ENCODE measurements at regions of chr2 and their contacts with region 1.

Region 1: GRCh38 chr2:201118121-201118960 is 2.4 kb downstream of the CFLAR start:
- DNase-seq: peak; percentile 90
- H3K4me3 ChIP-seq: peak overlapping the region; percentile 77 to 99 (median 77)
- H3K27ac ChIP-seq: peak overlapping the region; percentile 88
- H3K4me1 ChIP-seq: peaks cover 60% of the 10 kb centered on the region
- H3K27me3 ChIP-seq: no peaks in the 10 kb centered on the region
- CTCF ChIP-seq: peak; percentile 20 to 66
- POLR2A ChIP-seq: peak; percentile 67

Region 2: DNA sequence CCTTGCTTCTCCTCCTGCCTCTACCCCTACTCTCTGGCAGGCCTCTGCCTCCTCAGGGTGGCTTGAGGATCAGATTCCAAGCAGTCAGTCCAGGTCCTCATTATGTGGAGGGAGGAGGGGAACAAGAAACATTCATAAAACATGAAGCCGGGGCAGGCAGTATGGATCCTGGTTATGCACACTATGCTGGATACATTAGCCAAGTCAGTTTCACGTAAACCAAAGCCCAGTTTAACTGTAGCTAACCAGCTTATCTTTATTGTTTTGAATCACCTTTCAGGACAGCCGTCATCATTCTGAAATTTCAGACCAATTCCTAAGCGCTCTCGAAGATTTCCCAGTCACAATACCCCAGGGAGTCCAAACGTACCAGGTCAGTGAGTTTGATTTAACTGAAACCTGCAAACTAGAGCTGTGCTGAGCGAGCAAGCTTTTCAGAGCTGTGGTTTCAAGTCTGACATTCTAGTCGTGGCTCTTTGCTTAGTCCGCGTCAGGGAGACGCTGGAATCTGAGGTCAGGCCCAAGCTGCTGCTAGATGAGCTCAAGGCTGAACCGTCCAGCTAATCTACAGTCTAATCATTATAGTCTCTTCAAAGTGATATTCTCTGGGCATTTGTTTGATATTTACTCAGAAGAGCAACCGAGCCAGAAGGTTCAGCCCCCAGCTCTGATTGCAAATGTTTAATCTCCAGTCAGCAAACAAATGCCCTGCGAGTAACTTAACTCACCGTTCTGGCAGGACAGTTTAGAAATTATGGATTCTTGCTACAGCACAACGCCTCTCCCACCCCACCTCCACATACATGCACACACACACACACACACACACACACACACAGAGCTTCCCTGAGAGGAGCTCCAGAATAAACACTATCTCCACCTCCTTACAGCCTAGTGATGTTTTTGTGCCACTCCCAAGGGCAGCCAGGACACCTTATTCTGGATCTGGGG is 370.4 kb before region 1 on chr2:
- CTCF ChIA-PET with region 1: no interaction called
- POLR2A ChIA-PET with region 1: no interaction called
- dilution Hi-C with region 1: no loop called
- intact Hi-C with region 1: no loop called
- DNase-seq: no peak
- H3K4me3 ChIP-seq: no peak overlapping the region
- H3K27ac ChIP-seq: no peak overlapping the region
- H3K4me1 ChIP-seq: peaks cover 8% of the 10 kb centered on the region
- H3K27me3 ChIP-seq: no peaks in the 10 kb centered on the region
- CTCF ChIP-seq: no peak
- POLR2A ChIP-seq: no peak

Region 3: GRCh38 chr2:201130524-201131186 is 12.3 kb after region 1 on chr2:
- CTCF ChIA-PET with region 1: interaction called, 31 read pairs
- POLR2A ChIA-PET with region 1: interaction called, 11 read pairs
- dilution Hi-C with region 1: no loop called
- intact Hi-C with region 1: loop called (anchors 1 kb)
- DNase-seq: peak; percentile 98
- H3K4me3 ChIP-seq: peak overlapping the region in 2 of 3 experiments; percentile 8 to 53
- H3K27ac ChIP-seq: peak overlapping the region; percentile 99
- H3K4me1 ChIP-seq: peaks cover 81% of the 10 kb centered on the region
- H3K27me3 ChIP-seq: no peaks in the 10 kb centered on the region
- CTCF ChIP-seq: no peak
- POLR2A ChIP-seq: peak; percentile 85

Region 4: DNA sequence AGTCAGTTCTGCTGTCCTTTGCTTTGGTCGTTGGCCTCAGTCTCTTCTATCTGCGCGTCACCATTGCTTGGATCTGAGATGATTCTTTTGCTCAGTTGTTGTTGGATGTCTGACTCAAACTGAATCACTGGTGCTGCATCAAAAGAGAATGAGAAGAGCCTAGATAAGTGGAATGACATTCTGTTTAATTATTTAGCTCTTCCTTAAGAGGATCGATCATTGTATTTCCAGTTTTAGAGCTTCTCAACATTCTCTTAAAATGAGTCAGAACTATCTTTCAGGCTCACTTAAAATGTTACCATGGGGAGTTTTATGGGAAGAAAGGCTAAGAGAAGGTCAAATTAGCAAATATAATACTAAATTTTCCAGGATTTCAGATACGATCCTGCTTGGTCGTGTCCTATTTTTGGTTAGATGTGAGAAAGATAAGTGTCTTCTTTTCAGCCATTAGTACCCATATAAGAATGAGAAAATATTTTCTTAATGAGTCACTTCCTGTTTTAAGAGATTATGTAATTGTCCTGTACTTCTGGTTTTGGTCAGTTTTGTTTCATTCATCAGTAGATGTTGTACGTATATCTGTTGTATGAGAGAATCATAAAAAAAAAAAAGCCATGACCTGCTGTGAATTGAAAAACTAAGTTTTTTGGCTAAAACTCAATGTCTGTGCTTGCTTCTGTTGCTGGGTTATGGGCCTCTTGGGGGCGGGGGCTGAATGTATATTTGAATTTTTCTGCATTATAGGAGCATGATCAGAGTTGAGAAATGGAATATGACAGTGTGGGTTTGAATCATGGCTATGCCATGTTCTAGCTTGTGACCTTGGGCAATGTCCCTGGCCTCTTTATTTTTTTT is 33.0 kb after region 1 on chr2:
- CTCF ChIA-PET with region 1: interaction called, 18 read pairs
- POLR2A ChIA-PET with region 1: interaction called, 5 read pairs
- dilution Hi-C with region 1: no loop called
- intact Hi-C with region 1: loop called (anchors 1 kb)
- DNase-seq: peak; percentile 84
- H3K4me3 ChIP-seq: no peak overlapping the region
- H3K27ac ChIP-seq: peak overlapping the region; percentile 84
- H3K4me1 ChIP-seq: peaks cover 47% of the 10 kb centered on the region
- H3K27me3 ChIP-seq: no peaks in the 10 kb centered on the region
- CTCF ChIP-seq: no peak
- POLR2A ChIP-seq: peak; percentile 4

Region 5: GRCh38 chr2:201171259-201171814 is 53.0 kb after region 1 on chr2:
- CTCF ChIA-PET with region 1: interaction called, 3 read pairs
- POLR2A ChIA-PET with region 1: interaction called, 3 read pairs
- dilution Hi-C with region 1: no loop called
- intact Hi-C with region 1: loop called (anchors 2 kb)
- DNase-seq: peak; percentile 64
- H3K4me3 ChIP-seq: no peak overlapping the region
- H3K27ac ChIP-seq: no peak overlapping the region
- H3K4me1 ChIP-seq: peaks cover 10% of the 10 kb centered on the region
- H3K27me3 ChIP-seq: no peaks in the 10 kb centered on the region
- CTCF ChIP-seq: no peak
- POLR2A ChIP-seq: peak; percentile 66

Region 6: DNA sequence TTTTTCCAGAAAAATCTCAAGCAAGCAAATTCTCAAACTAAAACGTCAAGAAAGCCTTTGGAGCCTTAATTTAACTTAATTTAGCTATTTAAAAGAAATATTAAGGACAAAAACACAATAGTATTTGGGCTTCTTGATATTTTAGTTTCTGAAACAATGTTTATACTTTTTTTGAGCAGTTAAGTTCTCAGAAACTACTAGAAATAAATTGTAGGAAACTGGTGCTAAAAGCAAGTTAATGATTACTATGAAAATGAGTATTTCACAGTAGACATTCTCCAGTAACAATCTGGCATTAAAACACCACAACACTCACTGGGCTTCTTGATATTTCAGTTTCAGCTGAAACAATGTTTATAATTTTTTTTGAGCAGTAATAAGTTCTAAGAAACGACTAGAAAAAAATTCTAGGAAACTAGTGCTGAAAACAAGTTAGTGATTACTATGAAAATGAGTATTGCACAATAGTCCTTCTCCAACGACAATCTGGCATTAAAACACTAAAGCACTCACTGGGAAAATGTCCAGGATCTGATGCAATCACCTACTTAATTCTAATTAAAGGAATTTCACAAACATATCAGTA is 287.8 kb after region 1 on chr2:
- CTCF ChIA-PET with region 1: no interaction called
- POLR2A ChIA-PET with region 1: no interaction called
- dilution Hi-C with region 1: no loop called
- intact Hi-C with region 1: no loop called
- DNase-seq: peak; percentile 63
- H3K4me3 ChIP-seq: no peak overlapping the region
- H3K27ac ChIP-seq: no peak overlapping the region
- H3K4me1 ChIP-seq: peaks cover 8% of the 10 kb centered on the region
- H3K27me3 ChIP-seq: no peaks in the 10 kb centered on the region
- CTCF ChIP-seq: no peak
- POLR2A ChIP-seq: no peak